Activated naive CD4-positive, alpha-beta T cell treated with anti-CD3 and anti-CD28 coated beads for 36 hours (primary cell): ENCODE measurements at regions of chr20 and their contacts with region 1.

Region 1: DNA sequence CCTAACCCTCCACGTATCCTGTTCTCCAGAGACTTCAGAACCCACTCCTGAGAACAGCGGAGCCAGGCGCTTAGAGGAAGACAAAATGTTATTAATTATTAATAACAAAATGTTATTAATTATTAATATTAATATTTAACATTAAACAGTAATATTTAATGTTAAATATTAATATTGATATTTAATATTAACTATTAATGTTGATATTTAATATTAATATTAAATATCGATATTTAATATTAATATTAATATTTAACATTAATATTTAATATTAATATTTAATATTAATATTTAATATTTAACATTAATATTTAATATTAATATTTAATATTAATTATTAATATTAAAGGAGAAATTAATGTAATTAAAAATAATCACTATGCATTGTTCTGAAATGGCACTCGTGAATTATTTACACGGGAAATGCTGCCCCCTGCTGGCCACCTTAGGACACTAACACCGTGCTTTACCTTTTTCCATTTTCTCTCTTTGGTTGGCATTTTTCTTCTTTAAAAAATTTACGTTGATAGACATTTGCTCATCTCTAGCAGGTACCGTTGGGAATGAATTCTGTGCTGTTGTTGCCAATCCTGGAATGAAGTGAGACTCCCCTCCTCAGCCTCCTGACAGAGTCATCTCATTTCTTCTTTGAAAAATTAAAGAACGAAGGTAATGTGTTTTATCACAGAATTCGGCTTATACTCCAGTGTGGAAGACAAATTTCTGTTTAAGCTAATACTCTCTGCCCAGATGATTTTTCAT is 7.5 kb upstream of the GGTLC1 start:
- DNase-seq: peak; percentile 69
- H3K4me3 Mint-ChIP-seq: no peak overlapping the region
- H3K27ac Mint-ChIP-seq: no peak overlapping the region
- H3K4me1 Mint-ChIP-seq: peaks cover 2% of the 10 kb centered on the region
- H3K27me3 Mint-ChIP-seq: no peaks in the 10 kb centered on the region

Region 2: GRCh38 chr20:23668477-23668951 is 327.6 kb before region 1 on chr20:
- CTCF ChIA-PET with region 1: interaction called, 3 read pairs
- intact Hi-C with region 1: loop called (anchors 1 kb)
- DNase-seq: peak; percentile 63
- H3K4me3 Mint-ChIP-seq: no peak overlapping the region
- H3K27ac Mint-ChIP-seq: no peak overlapping the region
- H3K4me1 Mint-ChIP-seq: no peaks in the 10 kb centered on the region
- H3K27me3 Mint-ChIP-seq: no peaks in the 10 kb centered on the region

Region 3: GRCh38 chr20:23889775-23890211 is 106.3 kb before region 1 on chr20:
- CTCF ChIA-PET with region 1: interaction called, 3 read pairs
- intact Hi-C with region 1: loop called (anchors 1 kb)
- DNase-seq: peak; percentile 77
- H3K4me3 Mint-ChIP-seq: no peak overlapping the region
- H3K27ac Mint-ChIP-seq: no peak overlapping the region
- H3K4me1 Mint-ChIP-seq: no peaks in the 10 kb centered on the region
- H3K27me3 Mint-ChIP-seq: peaks cover 3% of the 10 kb centered on the region

Region 4: DNA sequence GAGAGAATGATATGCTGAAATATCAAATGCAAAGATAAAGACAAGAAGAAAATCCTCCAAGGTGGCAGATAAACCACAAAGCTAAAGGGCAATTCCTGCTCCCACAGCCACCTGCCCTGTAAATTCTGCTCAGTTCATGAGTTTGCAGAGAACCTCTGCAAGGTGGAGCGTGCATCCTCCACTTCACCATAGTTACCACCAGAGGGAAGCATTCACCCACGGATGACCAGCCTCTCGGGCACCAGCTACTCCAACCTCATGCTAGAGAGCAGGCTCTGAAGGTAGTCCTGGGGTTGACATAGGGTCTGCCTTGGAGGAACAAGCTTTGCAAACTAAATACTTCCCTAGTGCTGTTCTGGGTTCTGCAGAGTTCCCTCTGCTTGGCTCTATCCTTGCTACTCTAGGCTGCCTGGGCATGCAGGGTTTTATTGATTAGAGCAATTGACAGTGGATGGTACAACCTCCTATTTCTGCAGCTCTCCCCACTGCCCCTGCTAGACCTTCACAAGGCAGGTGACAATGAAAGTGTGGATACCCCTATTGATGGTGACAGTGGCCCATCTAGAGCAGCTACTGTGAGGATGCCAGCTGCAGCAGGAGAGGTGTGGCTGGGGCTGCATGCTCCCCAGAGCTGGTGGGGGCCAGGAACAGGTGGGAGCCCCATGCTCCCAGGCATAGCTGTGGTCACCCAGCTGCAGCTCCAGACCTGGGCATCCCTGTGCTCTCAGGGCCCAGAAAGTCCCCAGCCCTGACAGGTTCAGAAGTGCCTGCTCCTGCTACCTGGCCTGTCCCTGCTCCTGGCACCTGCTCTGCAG is 58.6 kb before region 1 on chr20:
- CTCF ChIA-PET with region 1: interaction called, 12 read pairs
- intact Hi-C with region 1: loop called (anchors 2 kb)
- DNase-seq: peak; percentile 78
- H3K4me3 Mint-ChIP-seq: no peak overlapping the region
- H3K27ac Mint-ChIP-seq: no peak overlapping the region
- H3K4me1 Mint-ChIP-seq: no peaks in the 10 kb centered on the region
- H3K27me3 Mint-ChIP-seq: peaks cover 2% of the 10 kb centered on the region

Region 5: DNA sequence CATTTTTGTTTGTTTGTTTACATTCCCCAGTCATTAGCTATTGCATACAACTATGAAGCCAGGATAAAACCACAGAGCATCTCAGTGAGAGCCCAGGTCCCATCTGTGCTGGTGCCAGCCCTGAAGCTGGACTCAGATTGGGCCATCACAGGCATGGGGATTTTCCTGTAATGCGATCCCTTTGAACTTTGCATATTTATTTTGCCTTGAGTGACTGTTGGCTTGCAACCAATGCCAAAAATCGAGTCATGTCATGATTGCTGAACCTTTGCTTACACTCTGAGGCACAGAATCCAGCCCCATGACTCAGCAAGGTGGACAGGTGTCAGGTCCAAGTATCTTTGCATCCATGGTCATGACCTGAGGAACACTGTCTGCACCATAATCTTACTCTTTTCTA is 38.7 kb after region 1 on chr20:
- CTCF ChIA-PET with region 1: no interaction called
- intact Hi-C with region 1: no loop called
- DNase-seq: no peak
- H3K4me3 Mint-ChIP-seq: no peak overlapping the region
- H3K27ac Mint-ChIP-seq: no peak overlapping the region
- H3K4me1 Mint-ChIP-seq: peaks cover 19% of the 10 kb centered on the region
- H3K27me3 Mint-ChIP-seq: no peaks in the 10 kb centered on the region

Region 6: DNA sequence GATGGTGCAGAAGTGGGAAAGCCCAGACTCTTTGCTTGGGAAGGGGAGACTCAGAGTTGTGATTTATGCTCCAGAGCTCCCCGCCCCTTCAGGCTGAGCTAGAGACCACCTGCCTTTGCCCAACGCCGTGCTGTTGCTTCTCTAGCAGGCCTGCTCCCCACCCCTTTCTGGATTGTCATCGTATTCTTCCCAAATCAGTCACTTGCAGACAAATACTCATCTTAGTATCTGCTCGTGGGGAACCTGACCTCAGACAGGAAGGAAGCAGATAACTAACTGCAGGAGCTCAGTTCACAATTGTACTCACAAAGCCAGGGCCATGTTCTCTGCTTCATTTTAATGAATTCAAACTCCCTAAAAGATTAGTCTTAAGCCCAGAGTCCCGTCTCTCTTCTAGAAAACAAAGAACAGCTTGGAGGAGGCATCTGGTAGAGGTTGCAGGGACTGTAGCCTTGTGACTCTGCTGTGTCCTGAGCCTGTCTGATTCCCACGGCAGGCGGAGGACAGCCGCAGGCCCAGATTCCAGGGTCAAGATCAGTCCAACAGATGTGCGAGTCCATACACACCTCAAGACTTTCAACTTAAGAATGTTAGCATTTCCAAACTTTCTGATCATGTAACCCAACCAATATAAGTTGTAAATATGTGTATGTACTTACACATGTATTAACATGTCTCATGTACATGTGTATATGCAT is 49.7 kb after region 1 on chr20:
- CTCF ChIA-PET with region 1: interaction called, 6 read pairs
- intact Hi-C with region 1: loop called (anchors 5 kb)
- DNase-seq: peak; percentile 74
- H3K4me3 Mint-ChIP-seq: no peak overlapping the region
- H3K27ac Mint-ChIP-seq: peak overlapping the region; percentile 61
- H3K4me1 Mint-ChIP-seq: peaks cover 42% of the 10 kb centered on the region
- H3K27me3 Mint-ChIP-seq: no peaks in the 10 kb centered on the region

Region 7: DNA sequence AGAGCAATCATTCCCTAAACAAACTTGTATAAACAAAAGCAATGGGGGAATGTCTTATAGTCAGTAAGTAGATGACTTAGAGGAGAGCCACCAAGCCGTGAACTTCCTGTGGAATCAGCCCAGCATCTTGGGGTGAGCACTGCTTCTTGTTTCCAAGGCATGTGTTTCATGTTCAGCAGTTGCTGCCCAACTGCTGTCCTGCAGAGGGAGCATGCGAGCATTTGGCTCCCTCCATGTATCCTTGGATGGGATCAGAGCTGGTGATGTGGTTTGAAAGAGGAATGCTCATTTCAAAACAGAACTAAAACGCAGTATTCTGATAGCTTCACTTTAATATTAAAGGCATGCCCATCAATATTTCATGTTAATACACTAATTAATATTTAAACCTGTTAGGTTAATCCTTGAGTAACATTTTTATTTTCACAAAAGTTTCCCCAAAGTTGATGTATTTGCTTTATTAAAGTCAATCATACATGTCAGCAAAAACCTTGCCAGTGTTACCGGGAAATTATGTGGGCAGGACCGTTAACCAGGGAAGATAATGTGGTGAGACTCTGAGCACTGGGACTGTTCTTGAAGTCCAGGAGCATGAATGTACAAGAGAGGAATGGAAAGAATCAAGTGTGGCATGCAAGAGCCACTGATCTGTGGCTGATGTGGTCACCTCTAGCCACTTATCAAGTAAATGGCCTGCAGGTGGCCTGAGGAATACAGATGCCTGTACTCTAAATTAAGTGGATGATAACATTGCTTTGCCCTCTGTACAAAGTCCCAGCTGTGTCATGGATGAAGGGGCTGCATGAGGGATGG is 164.7 kb after region 1 on chr20:
- CTCF ChIA-PET with region 1: no interaction called
- intact Hi-C with region 1: loop called (anchors 5 kb)
- DNase-seq: peak; percentile 40
- H3K4me3 Mint-ChIP-seq: no peak overlapping the region
- H3K27ac Mint-ChIP-seq: no peak overlapping the region
- H3K4me1 Mint-ChIP-seq: no peaks in the 10 kb centered on the region
- H3K27me3 Mint-ChIP-seq: peaks cover 2% of the 10 kb centered on the region

Region 8: DNA sequence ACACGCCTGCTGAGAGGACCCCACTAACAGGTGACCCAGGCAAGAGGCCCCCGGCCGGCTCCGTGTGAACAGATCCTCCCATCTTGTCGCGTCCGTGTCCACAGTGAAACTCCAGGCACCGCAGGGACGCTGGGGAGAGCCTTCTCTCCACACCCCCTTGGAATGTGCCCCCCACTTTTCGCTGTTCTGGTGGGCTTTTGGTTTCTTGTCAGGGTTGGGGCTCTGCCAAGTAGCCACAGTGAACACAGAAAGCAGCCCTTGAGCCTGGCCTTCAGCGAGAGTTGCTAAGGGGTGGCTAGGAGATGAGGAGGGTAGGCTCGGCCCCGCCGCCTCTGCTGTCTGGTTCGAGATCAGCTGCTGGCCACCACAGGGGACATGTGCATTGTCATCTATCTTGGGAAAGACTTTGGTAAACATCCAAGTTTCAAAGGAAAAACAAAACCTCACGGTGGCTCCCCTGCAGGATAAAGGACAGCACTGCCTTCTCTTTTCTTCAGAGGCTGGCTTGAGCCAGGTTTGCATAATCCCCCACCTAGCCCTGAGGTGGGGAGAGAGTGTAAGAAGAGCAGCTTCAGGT is 496.0 kb after region 1 on chr20:
- CTCF ChIA-PET with region 1: no interaction called
- intact Hi-C with region 1: no loop called
- DNase-seq: no peak
- H3K4me3 Mint-ChIP-seq: no peak overlapping the region
- H3K27ac Mint-ChIP-seq: no peak overlapping the region
- H3K4me1 Mint-ChIP-seq: no peaks in the 10 kb centered on the region
- H3K27me3 Mint-ChIP-seq: no peaks in the 10 kb centered on the region

Region 9: GRCh38 chr20:24823989-24824693 is 828.1 kb after region 1 on chr20:
- CTCF ChIA-PET with region 1: no interaction called
- intact Hi-C with region 1: no loop called
- DNase-seq: no peak
- H3K4me3 Mint-ChIP-seq: no peak overlapping the region
- H3K27ac Mint-ChIP-seq: no peak overlapping the region
- H3K4me1 Mint-ChIP-seq: no peaks in the 10 kb centered on the region
- H3K27me3 Mint-ChIP-seq: no peaks in the 10 kb centered on the region